ENCODE measurements at regions of chr10 and their contacts with region 1.

Region 1: DNA sequence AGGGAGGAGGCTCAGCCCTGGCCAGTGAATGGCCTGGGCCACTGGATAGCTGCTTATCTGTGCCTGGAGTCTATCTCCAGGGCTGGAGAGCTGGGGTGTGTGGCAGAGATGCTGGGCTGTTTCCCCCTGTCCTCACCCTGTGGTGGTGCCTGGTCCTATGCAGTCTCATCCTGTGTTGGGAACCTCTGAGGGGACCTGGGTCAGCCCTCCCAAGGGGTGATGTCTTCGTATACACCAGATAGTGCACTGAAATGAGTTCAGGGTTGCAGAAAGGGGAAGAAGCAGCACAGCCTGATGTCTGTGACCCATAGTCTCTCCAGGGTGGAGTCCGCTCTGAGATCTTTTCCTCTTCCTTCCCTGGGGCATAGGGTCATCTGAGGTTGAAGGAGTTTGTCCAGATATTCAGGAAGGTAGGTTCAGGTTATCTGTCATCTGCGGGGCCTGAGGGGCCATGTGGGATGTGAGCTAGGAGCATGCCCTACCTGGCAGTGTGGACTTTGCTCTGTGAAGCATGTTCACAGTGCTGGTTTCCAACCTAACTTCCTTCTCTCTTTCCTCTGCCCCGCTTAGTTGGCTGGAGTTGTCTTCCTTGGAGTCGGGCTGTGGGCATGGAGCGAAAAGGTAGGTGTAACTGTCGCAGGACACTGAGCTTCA is 33.4 kb upstream of the SH2D4B start:
- DNase-seq: peak; percentile 73 to 90
- H3K4me3 ChIP-seq: no peak overlapping the region; the same call in 1 of the 2 replicates
- H3K4me3 Mint-ChIP-seq: peak overlapping the region; percentile 66
- H3K27ac Mint-ChIP-seq: peak overlapping the region; percentile 87
- H3K4me1 ChIP-seq: peaks cover 96% of the 10 kb centered on the region
- H3K4me1 Mint-ChIP-seq: peaks cover 73% of the 10 kb centered on the region
- H3K27me3 ChIP-seq: no peaks in the 10 kb centered on the region
- H3K27me3 Mint-ChIP-seq: no peaks in the 10 kb centered on the region
- CTCF ChIP-seq: no peak

Region 2: GRCh38 chr10:80408242-80409101 is 95.8 kb before region 1 on chr10 and contains the start of gene PRXL2A:
- CTCF ChIA-PET with region 1: interaction called, 11 read pairs
- POLR2A ChIA-PET with region 1: interaction called, 13 read pairs
- intact Hi-C with region 1: no loop called
- DNase-seq: peak; percentile 92 to 96
- H3K4me3 ChIP-seq: peak within 1 kb of the TSS; percentile 92
- H3K4me3 Mint-ChIP-seq: peak within 1 kb of the TSS; percentile 95
- H3K27ac Mint-ChIP-seq: peak within 1 kb of the TSS; percentile 93
- H3K4me1 ChIP-seq: peaks cover 19% of the 10 kb centered on the region; the same call in 1 of the 2 replicates
- H3K4me1 Mint-ChIP-seq: peaks cover 25% of the 10 kb centered on the region
- H3K27me3 ChIP-seq: no peaks in the 10 kb centered on the region
- H3K27me3 Mint-ChIP-seq: no peaks in the 10 kb centered on the region
- CTCF ChIP-seq: peak in 1 of 2 experiments; percentile 0
- total RNA-seq, gene PRXL2A: 82.0 and 88.6 TPM in 2 replicates

Region 3: DNA sequence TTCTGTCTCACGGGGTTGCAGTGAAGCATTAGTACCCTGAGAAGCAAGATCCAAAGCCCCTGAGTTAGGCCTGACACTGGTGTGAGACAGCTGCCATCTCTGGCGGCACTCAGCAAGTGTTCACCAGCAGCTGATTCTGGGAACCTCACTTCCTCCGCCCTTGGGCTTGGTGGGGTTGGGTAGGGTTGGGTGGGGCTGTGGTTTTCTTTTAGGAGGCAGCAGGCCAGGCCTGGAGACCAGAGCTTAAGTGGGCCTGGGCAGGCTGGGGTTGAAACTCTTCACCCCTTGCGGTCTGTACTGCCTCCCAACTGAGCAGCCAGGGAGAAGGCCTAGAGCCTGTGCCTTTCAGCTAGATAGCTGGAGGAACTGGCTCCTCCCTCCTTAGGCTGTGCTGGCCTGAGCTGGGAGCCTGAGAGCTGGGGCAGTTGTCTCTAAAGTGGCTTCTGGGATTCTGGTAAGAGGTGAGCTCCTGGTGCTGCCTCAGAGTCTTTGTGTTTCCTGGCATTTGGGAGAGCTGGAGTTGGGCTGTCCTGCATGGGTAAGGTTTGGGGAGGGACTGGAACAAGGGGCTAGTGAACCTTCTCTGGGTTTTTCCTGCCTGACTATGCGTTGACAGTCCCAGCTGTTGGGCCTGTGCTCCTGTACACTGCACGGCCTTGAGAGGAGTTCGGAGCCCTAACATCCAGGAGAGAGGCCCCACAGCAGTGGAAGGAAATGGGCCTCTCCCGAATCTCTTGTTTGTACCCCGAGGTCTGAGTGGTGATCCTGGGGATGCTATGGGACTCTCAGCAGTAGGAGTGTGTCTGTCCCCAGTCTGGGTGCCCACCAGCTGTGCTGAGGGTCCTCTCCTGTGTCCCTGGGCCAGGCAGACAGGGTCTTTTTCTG is 45.0 kb before region 1 on chr10:
- CTCF ChIA-PET with region 1: interaction called, 55 read pairs
- POLR2A ChIA-PET with region 1: interaction called, 10 read pairs
- intact Hi-C with region 1: loop called (anchors 1 kb)
- DNase-seq: no peak
- H3K4me3 ChIP-seq: no peak overlapping the region
- H3K4me3 Mint-ChIP-seq: peak overlapping the region; percentile 45
- H3K27ac Mint-ChIP-seq: peak overlapping the region; percentile 70
- H3K4me1 ChIP-seq: peaks cover 76% of the 10 kb centered on the region
- H3K4me1 Mint-ChIP-seq: peaks cover 57% of the 10 kb centered on the region
- H3K27me3 ChIP-seq: no peaks in the 10 kb centered on the region
- H3K27me3 Mint-ChIP-seq: no peaks in the 10 kb centered on the region
- CTCF ChIP-seq: no peak

Region 4: DNA sequence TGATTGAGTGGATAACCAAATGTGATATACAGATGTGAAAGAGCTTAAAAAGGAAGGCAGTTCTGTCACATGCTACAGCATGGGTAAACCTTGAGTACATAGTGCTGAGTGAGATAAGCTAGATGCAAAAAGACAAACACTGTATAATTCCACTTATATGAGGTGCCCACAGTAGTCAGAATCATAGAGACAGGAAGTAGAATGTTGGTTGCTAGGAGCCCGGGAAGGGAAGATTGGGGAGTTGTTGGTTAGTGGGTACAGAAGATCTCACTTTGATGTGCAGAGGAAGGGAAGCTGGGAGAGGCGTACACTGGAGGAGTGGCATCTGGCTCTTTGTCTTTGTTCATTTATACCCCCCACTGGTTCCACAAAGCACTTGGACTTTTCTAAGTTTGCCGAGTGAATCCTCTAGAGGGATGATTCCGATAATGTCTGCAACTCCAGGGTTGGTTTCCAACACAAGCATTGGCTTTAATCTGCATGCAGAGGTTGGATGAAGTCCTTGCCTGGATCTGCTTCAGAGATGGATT is 10.7 kb before region 1 on chr10:
- CTCF ChIA-PET with region 1: interaction called, 13 read pairs
- POLR2A ChIA-PET with region 1: interaction called, 5 read pairs
- intact Hi-C with region 1: no loop called
- DNase-seq: no peak
- H3K4me3 ChIP-seq: no peak overlapping the region
- H3K4me3 Mint-ChIP-seq: peak overlapping the region; percentile 0
- H3K27ac Mint-ChIP-seq: peak overlapping the region; percentile 58
- H3K4me1 ChIP-seq: peaks cover 78% of the 10 kb centered on the region
- H3K4me1 Mint-ChIP-seq: peaks cover 70% of the 10 kb centered on the region
- H3K27me3 ChIP-seq: no peaks in the 10 kb centered on the region
- H3K27me3 Mint-ChIP-seq: no peaks in the 10 kb centered on the region
- CTCF ChIP-seq: no peak

Region 5: DNA sequence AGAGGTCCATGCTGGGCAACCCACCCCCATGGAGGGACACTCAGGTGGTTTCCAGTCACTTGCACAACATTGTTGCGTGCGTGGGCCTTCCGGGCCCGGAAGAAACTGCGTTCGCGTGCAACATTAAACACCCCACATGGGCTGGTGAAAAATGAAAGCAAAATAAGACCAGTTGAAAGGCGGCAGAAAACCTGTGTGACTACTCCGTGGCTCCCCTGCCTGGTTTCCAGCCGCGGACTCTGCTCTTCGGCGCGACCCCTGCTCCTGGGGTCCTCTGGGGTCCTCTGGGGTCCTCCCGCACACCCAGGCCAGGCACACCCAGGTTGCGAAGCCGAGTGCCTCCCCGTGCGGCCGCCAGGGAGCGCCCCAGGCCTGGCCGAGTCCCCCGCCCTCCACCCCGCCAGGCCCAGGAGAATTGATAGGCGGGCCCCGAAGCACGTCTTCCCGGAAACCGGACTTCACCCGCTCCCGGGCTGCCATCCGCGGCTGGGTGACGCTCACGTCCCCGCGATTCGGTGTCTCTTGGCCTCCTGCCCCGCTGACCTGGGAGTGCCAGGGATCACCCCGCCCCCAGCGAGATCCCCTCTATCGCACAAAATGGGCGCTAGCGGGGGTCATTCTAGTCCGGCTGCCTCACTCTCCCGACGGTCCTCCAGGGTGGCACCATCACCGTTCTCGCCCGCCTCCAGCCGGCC is 31.5 kb after region 1 on chr10:
- CTCF ChIA-PET with region 1: interaction called, 5 read pairs
- POLR2A ChIA-PET with region 1: no interaction called
- intact Hi-C with region 1: loop called (anchors 1 kb)
- DNase-seq: peak; percentile 80 to 86
- H3K4me3 ChIP-seq: peak overlapping the region; percentile 63
- H3K4me3 Mint-ChIP-seq: peak overlapping the region; percentile 81
- H3K27ac Mint-ChIP-seq: peak overlapping the region; percentile 93
- H3K4me1 ChIP-seq: peaks cover 4% of the 10 kb centered on the region; the same call in 1 of the 2 replicates
- H3K4me1 Mint-ChIP-seq: no peaks in the 10 kb centered on the region
- H3K27me3 ChIP-seq: no peaks in the 10 kb centered on the region
- H3K27me3 Mint-ChIP-seq: no peaks in the 10 kb centered on the region
- CTCF ChIP-seq: peak; percentile 72 to 94

Region 6: GRCh38 chr10:80681142-80681541 is 176.9 kb after region 1 on chr10:
- CTCF ChIA-PET with region 1: no interaction called
- POLR2A ChIA-PET with region 1: no interaction called
- intact Hi-C with region 1: no loop called
- DNase-seq: no peak
- H3K4me3 ChIP-seq: no peak overlapping the region
- H3K4me3 Mint-ChIP-seq: no peak overlapping the region
- H3K27ac Mint-ChIP-seq: no peak overlapping the region
- H3K4me1 ChIP-seq: peaks cover 10% of the 10 kb centered on the region
- H3K4me1 Mint-ChIP-seq: peaks cover 14% of the 10 kb centered on the region
- H3K27me3 ChIP-seq: no peaks in the 10 kb centered on the region
- H3K27me3 Mint-ChIP-seq: no peaks in the 10 kb centered on the region
- CTCF ChIP-seq: no peak

Measured in Caco-2 (cell line).